AG04450 (cell line): ENCODE measurements at regions of chr19 and their contacts with region 1.

Region 1: DNA sequence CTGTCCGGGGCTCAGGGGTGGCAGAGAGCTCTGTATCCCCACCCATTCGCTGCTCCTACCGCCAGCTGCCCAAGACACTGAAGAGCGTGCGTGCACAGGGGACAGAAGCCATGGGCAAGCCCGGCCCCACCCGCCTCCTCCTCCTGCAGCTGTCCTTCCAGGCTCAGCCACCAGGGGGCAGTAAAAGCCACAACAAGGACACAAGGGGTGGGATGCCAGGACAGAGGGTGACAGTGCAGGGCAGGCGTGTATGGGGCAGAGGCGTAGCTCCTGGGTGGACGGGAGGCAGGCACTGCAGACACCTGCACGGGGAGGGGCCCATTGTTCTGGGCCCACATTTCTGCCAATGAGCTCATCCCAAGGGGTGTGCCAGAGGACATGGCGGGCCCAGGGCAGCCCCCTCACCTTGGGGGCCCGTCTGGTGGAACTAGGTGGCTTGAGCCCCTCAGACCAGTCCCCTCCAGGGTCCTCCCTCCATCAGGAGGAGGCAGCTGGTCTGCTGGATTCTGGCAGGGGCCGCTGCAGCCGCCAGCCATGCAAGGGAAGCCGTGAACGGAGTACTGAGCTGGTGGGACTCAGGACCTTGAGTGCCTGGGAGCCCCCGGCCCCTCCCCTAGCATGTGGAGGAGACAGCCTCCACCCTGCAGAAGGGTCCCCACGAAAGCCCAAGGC is 61.1 kb downstream of the MLLT1 start:
- DNase-seq: no peak
- H3K4me3 ChIP-seq: no peak overlapping the region
- H3K27ac ChIP-seq: peak overlapping the region; percentile 39
- H3K27me3 ChIP-seq: no peaks in the 10 kb centered on the region
- CTCF ChIP-seq: peak; percentile 94

Region 2: GRCh38 chr19:6181119-6181518 is 37.5 kb before region 1 on chr19:
- CTCF ChIA-PET with region 1: no interaction called
- POLR2A ChIA-PET with region 1: no interaction called
- DNase-seq: no peak
- H3K4me3 ChIP-seq: no peak overlapping the region
- H3K27ac ChIP-seq: no peak overlapping the region
- H3K27me3 ChIP-seq: peaks cover 11% of the 10 kb centered on the region
- CTCF ChIP-seq: no peak

Region 3: DNA sequence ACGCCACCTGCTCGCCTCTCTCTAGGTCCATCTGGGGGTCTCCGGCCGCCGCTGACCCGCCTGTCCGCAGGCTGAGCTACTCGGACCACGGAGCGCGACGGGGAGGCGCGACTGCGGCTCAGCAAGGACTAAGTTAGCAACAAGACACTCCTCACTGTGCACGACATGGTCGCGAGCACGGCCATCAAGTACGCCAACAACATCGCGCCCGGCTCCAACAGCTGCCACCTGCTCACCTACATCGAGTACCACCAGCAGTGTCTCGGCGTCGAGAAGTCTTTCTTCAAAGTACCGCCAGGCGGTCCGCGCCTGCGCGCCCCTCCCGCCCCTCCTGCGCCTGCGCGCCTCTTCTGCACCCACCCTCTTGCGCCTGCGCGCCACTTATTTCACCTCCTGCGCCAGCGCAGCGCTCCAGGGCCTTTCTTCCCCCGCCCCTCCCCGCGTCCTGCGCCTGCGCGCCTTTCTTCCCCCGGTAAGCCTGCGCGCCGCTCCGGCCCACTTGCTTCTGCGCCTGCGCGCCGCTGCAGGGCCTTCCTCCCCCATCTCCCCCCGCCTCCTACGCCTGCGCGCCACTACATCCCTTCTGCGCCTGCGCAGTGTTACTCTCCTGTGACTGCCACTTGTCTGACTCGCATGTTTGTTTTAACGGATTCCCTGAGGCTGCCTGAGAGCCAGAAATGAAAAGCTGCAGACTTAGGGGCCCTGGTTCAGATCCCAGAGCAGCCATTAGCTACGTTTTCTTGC is 19.2 kb before region 1 on chr19:
- CTCF ChIA-PET with region 1: interaction called, 17 read pairs
- POLR2A ChIA-PET with region 1: interaction called, 3 read pairs
- DNase-seq: peak; percentile 97
- H3K4me3 ChIP-seq: peak overlapping the region; percentile 94
- H3K27ac ChIP-seq: no peak overlapping the region
- H3K27me3 ChIP-seq: no peaks in the 10 kb centered on the region
- CTCF ChIP-seq: peak; percentile 38

Region 4: GRCh38 chr19:6238643-6239281 is 20.1 kb after region 1 on chr19:
- CTCF ChIA-PET with region 1: interaction called, 26 read pairs
- POLR2A ChIA-PET with region 1: no interaction called
- DNase-seq: no peak
- H3K4me3 ChIP-seq: no peak overlapping the region
- H3K27ac ChIP-seq: peak overlapping the region; percentile 47
- H3K27me3 ChIP-seq: no peaks in the 10 kb centered on the region
- CTCF ChIP-seq: no peak

Region 5: DNA sequence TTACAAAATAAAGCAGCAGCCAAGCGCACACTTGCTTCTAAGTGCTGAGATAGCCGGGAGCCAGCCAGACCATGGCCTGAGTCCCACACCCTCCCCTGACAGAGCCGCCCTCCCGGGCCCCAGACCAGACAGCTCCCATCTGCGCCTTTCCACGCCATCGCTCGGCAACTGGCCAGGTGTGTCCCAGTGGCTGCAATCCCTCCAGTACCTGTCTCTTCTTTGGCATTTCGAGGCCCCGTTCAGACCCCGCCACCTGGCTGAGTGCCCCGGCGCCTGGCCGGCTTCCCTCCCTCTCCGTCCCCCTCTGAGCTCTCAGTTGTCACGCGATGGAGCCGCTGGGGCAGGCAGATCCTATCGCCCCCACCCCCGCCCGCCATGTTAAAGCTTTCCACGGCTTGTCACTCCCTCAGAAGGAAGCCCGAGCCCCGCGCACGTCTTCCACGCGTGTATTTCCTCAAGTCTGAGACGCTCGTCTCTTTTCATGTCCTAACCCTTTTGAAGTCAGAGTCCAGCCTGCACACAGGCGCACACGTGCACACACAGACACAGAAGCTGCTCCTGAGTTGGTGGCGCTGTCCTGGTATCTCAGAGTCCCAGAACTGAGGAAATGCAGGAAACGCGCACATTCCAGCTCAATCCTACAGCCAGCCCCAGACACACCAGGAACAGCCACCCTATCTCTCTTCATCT is 53.2 kb after region 1 on chr19:
- CTCF ChIA-PET with region 1: interaction called, 17 read pairs
- POLR2A ChIA-PET with region 1: no interaction called
- DNase-seq: no peak
- H3K4me3 ChIP-seq: peak overlapping the region; percentile 21
- H3K27ac ChIP-seq: peak overlapping the region; percentile 78
- H3K27me3 ChIP-seq: no peaks in the 10 kb centered on the region
- CTCF ChIP-seq: 0 out of 2 replicates have a peak, but pooled peaks have one; percentile 4

Region 6: GRCh38 chr19:6292006-6292405 is 73.4 kb after region 1 on chr19:
- CTCF ChIA-PET with region 1: interaction called, 21 read pairs
- POLR2A ChIA-PET with region 1: no interaction called
- DNase-seq: no peak
- H3K4me3 ChIP-seq: no peak overlapping the region
- H3K27ac ChIP-seq: no peak overlapping the region
- H3K27me3 ChIP-seq: no peaks in the 10 kb centered on the region
- CTCF ChIP-seq: no peak

Region 7: GRCh38 chr19:6362027-6362350 is 143.4 kb after region 1 on chr19:
- CTCF ChIA-PET with region 1: interaction called, 11 read pairs
- POLR2A ChIA-PET with region 1: no interaction called
- DNase-seq: no peak
- H3K4me3 ChIP-seq: peak overlapping the region; percentile 75
- H3K27ac ChIP-seq: peak overlapping the region; percentile 11
- H3K27me3 ChIP-seq: no peaks in the 10 kb centered on the region
- CTCF ChIP-seq: no peak